ENCODE measurements at regions of chr1 and their contacts with region 1.

Region 1: GRCh38 chr1:9004700-9005394 is 21.4 kb downstream of the SLC2A7 start:
- DNase-seq: peak; percentile 79 to 88 (median 83)
- H3K4me3 ChIP-seq: peak overlapping the region in 1 of 7 experiments; percentile 1
- H3K27ac ChIP-seq: no peak overlapping the region
- H3K4me1 ChIP-seq: peaks cover 0 to 17% (median 11%) of the 10 kb centered on the region in 4 experiments
- H3K27me3 ChIP-seq: no peaks in the 10 kb centered on the region

Region 2: GRCh38 chr1:8926707-8927694 is 77.8 kb before region 1 on chr1:
- CTCF ChIA-PET with region 1: interaction called, 62 read pairs
- POLR2A ChIA-PET with region 1: no interaction called
- DNase-seq: no peak
- H3K4me3 ChIP-seq: no peak overlapping the region
- H3K27ac ChIP-seq: no peak overlapping the region
- H3K4me1 ChIP-seq: peaks cover 4 to 19% (median 17%) of the 10 kb centered on the region in 4 experiments
- H3K27me3 ChIP-seq: no peaks in the 10 kb centered on the region

Region 3: DNA sequence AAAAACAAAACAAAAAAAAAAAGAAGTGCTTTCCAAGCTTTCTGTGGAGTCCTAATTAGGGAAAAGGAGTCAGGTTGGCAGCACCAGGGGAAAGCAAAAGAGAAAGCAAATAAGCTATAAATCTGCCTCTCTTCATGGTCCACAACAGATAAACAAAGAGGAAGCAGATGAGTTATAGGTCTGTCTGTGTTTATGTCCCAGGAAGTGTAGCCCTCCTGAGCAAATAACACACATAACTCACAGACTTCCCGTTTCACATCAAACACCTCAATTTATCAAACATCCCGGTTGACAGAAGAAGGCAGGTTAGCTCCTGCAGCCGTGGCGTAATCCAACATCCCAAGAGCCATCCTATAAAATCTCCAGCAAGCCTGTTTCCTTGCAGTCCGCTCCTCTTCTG is 70.2 kb after region 1 on chr1:
- CTCF ChIA-PET with region 1: interaction called, 12 read pairs
- POLR2A ChIA-PET with region 1: no interaction called
- DNase-seq: peak; percentile 70 to 94 (median 89)
- H3K4me3 ChIP-seq: peak overlapping the region in 2 of 7 experiments; percentile 25 to 27
- H3K27ac ChIP-seq: peak overlapping the region in 1 of 2 experiments; percentile 45
- H3K4me1 ChIP-seq: peaks cover 27 to 72% (median 67%) of the 10 kb centered on the region in 4 experiments
- H3K27me3 ChIP-seq: no peaks in the 10 kb centered on the region

Measured in common myeloid progenitor, CD34-positive (primary cell).